ENCODE measurements at regions of chr7 and their contacts with region 1.

Region 1: GRCh38 chr7:156892821-156893706 is at the start of gene LMBR1:
- DNase-seq: peak; percentile 83 to 94 (median 92)
- H3K4me3 ChIP-seq: peak within 1 kb of the TSS; percentile 56 to 99 (median 90)
- H3K27ac ChIP-seq: peak within 1 kb of the TSS; percentile 10 to 96 (median 84)
- H3K27me3 ChIP-seq: no peaks in the 10 kb centered on the region
- CTCF ChIP-seq: peak in 52 of 56 donors; percentile 25 to 66 (median 52)
- total RNA-seq, gene LMBR1: 71.3 to 148 (median 106) TPM

Region 2: DNA sequence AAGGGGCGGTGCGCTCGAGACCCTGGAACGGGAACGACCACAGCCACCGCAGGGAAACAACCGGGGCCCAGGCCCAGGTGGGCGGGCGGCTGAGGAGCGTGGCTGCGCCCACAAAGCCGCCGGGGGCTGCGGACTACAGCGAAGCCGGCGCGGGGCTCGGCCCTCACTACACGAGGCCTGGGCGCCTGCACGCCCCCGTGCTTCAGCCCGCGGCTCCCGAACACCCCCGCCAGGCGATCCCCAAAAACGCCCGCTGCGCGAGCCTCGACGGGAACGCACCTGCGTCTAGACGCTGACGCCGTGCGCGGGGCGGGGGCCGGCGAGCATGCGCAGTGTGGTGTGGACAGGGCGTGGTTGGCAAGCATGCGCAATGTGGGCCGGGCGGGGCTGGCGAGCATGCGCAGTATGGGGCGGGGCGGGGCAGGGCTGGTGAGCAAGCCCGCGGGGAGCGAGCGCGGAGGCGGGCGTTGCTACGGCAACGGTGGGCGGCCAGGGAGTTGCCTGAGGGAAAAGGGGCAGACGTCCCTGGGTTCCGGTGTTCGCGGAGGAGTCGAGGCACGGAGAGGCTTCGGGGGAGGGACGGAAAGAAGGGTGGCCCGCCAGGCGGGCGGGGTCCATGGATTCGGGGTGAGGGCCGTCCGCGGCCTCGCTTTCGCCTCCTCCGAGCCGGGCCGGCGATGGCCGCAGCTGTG is 252.7 kb before region 1 on chr7 and contains the start of gene RNF32:
- intact Hi-C with region 1: loop called in 1 of 2 experiments (anchors 10 kb)
- DNase-seq: peak; percentile 79 to 94 (median 88)
- H3K4me3 ChIP-seq: peak within 1 kb of the TSS; percentile 57 to 99 (median 86)
- H3K27ac ChIP-seq: peak within 1 kb of the TSS in 57 of 59 donors; percentile 46 to 91 (median 81)
- H3K27me3 ChIP-seq: no peaks in the 10 kb centered on the region
- CTCF ChIP-seq: peak in 8 of 56 donors; percentile 7 to 40 (median 12)
- total RNA-seq, gene RNF32: 0.48 to 8.9 (median 2.9) TPM

Region 3: DNA sequence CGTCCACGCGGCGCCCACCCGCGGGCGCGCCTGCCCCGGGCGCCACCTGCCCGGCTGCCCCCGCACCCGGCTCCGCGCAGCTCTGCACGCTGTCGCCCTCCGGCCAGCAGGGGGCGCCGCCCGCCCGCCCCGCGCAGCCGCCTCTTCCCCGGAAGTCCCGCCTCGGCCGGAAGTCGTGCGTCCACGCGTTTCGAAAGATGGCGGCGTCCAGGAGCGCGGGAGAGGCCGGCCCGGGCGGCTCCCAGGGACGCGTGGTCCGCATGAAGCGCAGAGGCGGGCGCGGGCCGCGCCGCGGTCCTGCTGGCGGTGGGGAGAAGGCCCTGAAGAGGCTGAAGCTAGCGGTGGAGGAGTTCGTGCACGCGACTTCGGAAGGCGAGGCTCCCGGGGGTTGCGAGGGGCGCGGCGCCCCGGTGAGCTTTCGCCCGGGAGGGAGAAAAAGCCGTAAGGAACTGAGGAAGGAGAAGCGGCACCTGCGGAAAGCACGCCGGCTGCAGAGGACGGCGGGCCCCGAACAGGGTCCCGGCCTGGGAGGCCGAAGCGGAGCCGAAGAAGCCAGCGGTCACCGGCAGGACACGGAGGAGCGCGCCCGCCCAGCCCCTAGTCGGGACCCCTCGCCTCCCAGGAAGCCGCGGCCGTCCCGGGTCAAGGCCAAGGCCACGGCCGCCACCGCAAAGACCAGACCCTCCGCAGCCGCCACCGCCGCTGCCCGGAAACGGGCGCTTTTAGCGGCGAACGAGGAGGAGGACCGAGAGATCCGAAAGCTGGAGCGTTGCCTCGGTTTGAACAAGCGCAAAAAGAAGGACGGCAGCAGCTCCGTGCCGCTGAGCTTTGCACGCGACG is 56.7 kb after region 1 on chr7 and contains the start of gene NOM1:
- intact Hi-C with region 1: loop called (anchors 2 to 5 kb)
- DNase-seq: peak; percentile 67 to 91 (median 82)
- H3K4me3 ChIP-seq: peak within 1 kb of the TSS; percentile 64 to 100 (median 96)
- H3K27ac ChIP-seq: peak within 1 kb of the TSS in 32 of 59 donors; percentile 7 to 78 (median 50)
- H3K27me3 ChIP-seq: peaks cover 0 to 2% (median 0%) of the 10 kb centered on the region in 45 donors
- CTCF ChIP-seq: peak; percentile 24 to 98 (median 74)
- total RNA-seq, gene NOM1: 14.2 to 36.0 (median 24.9) TPM

Region 4: GRCh38 chr7:157138424-157139110 is 245.5 kb after region 1 on chr7 and contains the start of gene UBE3C:
- intact Hi-C with region 1: loop called in 1 of 2 experiments (anchors 10 kb)
- DNase-seq: peak; percentile 70 to 93 (median 86)
- H3K4me3 ChIP-seq: peak within 1 kb of the TSS; percentile 58 to 95 (median 84)
- H3K27ac ChIP-seq: peak within 1 kb of the TSS; percentile 54 to 96 (median 90)
- H3K27me3 ChIP-seq: no peaks in the 10 kb centered on the region
- CTCF ChIP-seq: peak in 21 of 56 donors; percentile 5 to 44 (median 20)
- total RNA-seq, gene UBE3C: 46.9 to 76.5 (median 59.8) TPM

Measured in dorsolateral prefrontal cortex (tissue), 120 donors.